ENCODE measurements at regions of chr19 and their contacts with region 1.

Region 1: DNA sequence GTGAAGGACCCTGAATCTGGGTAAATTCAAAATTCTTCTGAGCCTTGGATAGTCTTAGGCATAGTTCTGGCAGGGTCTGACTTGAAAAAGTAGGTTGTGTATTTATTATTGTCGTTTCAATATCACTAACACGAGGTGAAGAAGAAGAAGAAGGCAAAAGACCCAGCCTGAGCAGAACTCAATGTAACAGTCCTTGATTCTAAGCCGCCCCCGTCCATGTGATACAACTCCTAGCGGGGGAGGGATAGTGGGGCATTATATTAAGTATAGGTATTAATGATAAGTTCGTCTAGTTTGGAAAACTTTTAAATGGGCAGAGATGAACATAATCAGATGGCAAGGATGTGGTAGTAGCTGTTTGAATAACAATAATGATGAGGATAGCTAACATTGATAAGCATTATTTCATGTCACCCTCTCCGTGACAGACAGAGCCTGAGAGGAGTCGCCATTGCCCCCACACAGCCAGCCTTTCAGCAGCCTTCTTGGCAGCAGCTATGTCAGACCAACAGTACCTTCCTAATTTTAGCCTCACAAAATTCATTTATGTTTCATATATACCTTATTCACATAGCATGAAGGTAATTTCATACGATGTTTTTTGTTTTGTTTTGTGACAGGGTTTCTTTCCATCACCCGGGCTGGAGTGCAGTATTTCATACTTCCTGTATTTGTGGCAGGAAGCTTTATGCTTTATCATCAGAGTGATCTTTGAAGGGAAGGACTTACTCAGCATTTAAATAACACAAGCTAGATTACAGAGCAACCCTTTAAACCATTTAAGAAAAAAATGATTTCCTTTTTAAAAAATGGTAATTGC is 64.4 kb upstream of the NPAS1 start:
- DNase-seq: peak; percentile 69
- ATAC-seq: peak; percentile 81
- H3K4me3 Mint-ChIP-seq: peak overlapping the region; percentile 76
- H3K27ac Mint-ChIP-seq: peak overlapping the region; percentile 100
- H3K4me1 Mint-ChIP-seq: peaks cover 82% of the 10 kb centered on the region
- H3K27me3 Mint-ChIP-seq: no peaks in the 10 kb centered on the region

Region 2: DNA sequence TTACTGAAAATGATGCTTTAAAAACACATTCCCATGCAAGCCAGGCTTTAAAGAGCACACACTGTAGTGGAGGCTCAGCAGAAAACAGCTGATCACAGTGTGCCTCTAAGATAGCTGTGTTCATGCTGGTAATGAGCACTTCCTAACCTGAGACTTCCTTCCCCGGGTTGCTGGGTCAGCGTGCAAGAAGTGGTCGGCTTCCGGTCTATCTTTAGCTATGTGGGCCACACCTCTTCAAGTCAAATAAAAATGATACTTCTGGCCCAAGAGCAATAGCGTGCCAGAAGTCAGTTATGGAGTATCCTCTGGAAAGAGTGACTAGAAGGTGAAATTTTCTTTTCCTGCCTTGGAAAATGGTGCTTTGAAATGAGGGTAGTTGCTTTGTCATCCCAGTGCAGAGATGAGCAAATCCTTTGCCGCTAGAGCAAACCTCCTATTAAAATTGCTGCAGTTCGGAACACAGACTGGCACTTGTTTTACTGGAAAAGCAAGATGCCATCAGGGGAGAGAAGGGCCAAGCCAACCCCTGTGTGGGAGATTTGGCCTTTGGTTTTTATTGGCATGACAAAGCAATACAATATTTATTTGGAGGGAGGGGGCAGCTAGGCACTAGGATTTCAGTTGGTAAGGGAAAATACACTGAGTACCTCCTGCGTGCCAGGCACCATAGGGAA is 30.2 kb before region 1 on chr19:
- CTCF ChIA-PET with region 1: interaction called, 17 read pairs
- DNase-seq: peak; percentile 75
- ATAC-seq: peak; percentile 97
- H3K4me3 Mint-ChIP-seq: peak overlapping the region; percentile 8
- H3K27ac Mint-ChIP-seq: peak overlapping the region; percentile 79
- H3K4me1 Mint-ChIP-seq: peaks cover 51% of the 10 kb centered on the region
- H3K27me3 Mint-ChIP-seq: no peaks in the 10 kb centered on the region

Region 3: GRCh38 chr19:46944918-46945628 is 10.1 kb before region 1 on chr19:
- CTCF ChIA-PET with region 1: interaction called, 10 read pairs
- DNase-seq: no peak
- ATAC-seq: peak; percentile 45
- H3K4me3 Mint-ChIP-seq: no peak overlapping the region
- H3K27ac Mint-ChIP-seq: peak overlapping the region; percentile 54
- H3K4me1 Mint-ChIP-seq: peaks cover 27% of the 10 kb centered on the region
- H3K27me3 Mint-ChIP-seq: no peaks in the 10 kb centered on the region

Region 4: GRCh38 chr19:47089767-47090350 is 134.7 kb after region 1 on chr19:
- CTCF ChIA-PET with region 1: no interaction called
- DNase-seq: no peak
- ATAC-seq: no peak
- H3K4me3 Mint-ChIP-seq: no peak overlapping the region
- H3K27ac Mint-ChIP-seq: no peak overlapping the region
- H3K4me1 Mint-ChIP-seq: peaks cover 51% of the 10 kb centered on the region
- H3K27me3 Mint-ChIP-seq: no peaks in the 10 kb centered on the region